PC-9 (cell line): ENCODE measurements at regions of chr10 and their contacts with region 1.

Region 1: DNA sequence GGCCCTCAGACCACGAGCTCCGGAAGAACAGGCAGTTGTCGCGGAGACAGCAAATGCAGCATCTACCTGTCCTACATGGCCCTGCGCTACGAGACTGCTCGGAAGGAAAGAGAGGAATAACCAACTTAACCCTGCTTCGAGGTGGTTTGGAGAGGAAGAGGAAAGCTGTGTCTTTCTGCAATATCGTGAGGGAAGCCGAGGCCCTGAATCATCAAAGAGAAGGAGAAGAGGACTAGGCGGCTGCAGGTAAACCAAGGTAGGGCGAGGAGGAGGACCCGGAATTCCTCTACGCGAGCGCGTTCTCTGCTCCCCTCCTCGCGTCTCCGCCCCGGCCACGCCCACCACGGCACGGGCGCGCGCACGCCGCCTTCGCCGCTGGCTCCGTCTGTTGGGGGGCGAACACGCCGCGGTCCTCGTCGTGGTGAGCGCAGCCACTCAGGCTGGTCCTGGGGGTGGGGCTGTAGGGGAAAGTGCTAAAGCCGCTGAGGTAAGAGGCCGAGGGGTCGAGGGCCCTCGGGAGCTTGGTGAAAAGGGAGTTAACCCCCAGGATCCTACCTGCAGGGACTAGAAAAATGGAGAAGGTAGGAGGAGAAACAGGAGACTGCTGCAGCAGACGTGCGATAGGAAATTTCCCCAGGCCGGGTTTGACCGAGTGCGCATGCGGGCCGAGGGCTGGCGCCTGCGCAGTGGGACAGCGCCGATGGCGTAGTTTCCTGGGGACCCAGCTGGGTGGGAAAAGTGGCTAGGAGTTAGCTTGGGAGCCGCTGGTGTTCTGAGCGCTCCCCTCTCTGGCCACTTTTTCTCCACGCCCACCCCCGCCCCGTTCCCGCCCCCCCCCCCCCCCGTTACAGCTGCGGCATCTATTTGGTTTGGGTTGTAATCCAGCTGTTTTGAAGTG is at the starts of genes ANAPC16 and ASCC1:
- DNase-seq: peak; percentile 88 to 98
- H3K4me3 ChIP-seq: peak within 1 kb of the TSS; percentile 80
- H3K27ac ChIP-seq: peak within 1 kb of the TSS; percentile 90
- H3K4me1 ChIP-seq: peaks cover 45% of the 10 kb centered on the region
- H3K27me3 ChIP-seq: no peaks in the 10 kb centered on the region
- CTCF ChIP-seq: no peak
- total RNA-seq, gene ANAPC16: 142 and 171 TPM in 2 replicates
- total RNA-seq, gene ASCC1: 108 and 129 TPM in 2 replicates

Region 2: GRCh38 chr10:71974489-71975021 is 241.3 kb before region 1 on chr10:
- CTCF ChIA-PET with region 1: no interaction called
- POLR2A ChIA-PET with region 1: interaction called, 6 read pairs
- intact Hi-C with region 1: loop called (anchors 5 kb)
- DNase-seq: peak; percentile 69 to 91
- H3K4me3 ChIP-seq: no peak overlapping the region
- H3K27ac ChIP-seq: peak overlapping the region; percentile 56
- H3K4me1 ChIP-seq: peaks cover 37% of the 10 kb centered on the region
- H3K27me3 ChIP-seq: no peaks in the 10 kb centered on the region
- CTCF ChIP-seq: no peak

Region 3: DNA sequence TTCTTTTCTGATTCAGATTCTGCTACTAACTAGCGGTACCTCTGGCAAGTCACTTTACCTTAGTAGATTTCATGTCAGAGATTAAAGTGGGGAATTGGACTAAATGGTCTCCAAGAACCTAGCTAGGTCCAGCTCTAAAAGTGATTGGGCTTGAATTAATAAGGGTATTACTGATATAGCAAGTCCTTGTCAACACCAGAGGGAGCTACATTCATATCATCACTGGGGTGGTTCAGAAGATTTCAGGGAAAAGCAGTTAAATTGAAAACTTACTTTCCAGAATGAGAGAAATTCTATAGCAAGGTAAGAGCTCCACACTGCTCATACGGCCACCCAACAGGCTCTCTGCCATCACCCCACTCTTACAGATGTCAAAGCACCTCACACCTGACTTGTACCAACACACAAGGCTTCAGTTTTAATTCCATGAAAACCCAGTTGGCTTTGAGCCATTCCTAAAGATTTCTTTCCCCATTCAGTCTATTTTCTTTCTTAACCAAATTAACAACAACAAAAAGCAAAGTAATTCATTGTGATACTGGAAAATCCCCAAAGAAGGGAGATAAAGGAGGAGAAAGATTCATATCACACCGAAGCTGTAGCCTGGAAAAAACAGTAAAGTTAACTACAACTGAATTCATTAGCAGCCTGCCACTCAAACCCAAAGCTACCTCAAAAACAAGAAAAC is 89.6 kb before region 1 on chr10:
- CTCF ChIA-PET with region 1: interaction called, 8 read pairs
- POLR2A ChIA-PET with region 1: interaction called, 16 read pairs
- intact Hi-C with region 1: no loop called
- DNase-seq: no peak
- H3K4me3 ChIP-seq: no peak overlapping the region
- H3K27ac ChIP-seq: no peak overlapping the region
- H3K4me1 ChIP-seq: no peaks in the 10 kb centered on the region
- H3K27me3 ChIP-seq: no peaks in the 10 kb centered on the region
- CTCF ChIP-seq: peak; percentile 71

Region 4: DNA sequence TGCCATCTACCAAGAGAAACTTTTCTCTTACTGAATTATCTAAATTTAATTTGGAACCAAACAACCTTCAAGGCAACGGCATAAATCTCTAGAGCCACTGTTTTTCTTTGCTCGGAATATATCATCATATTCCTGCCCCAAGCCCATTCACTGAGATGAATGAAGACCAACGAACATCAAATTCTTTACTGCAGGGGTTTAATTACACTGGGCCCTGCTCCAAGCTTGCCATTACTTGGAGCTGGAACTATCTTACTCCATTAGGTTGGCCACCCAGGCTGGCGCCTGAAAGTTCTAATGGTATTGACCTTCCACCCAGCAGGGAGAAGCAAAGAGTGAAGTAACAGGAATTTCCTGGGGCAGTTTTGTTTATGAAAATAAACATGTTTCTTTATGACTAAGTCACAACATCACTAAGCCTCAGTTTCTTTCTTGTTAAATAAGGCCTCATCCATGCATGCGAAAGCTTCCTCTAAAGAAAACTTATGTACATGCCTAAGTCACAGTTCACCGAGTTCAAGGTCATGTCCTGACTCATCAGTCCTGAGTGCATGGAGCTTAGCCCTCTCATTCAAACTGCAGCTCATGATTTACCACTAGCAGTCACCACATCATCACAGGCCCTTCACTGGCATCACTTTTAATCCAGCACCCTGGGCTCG is 42.1 kb before region 1 on chr10:
- CTCF ChIA-PET with region 1: interaction called, 4 read pairs
- POLR2A ChIA-PET with region 1: interaction called, 7 read pairs
- intact Hi-C with region 1: loop called (anchors 2 kb)
- DNase-seq: peak in 1 of 2 experiments; percentile 48
- H3K4me3 ChIP-seq: no peak overlapping the region
- H3K27ac ChIP-seq: peak overlapping the region; percentile 43
- H3K4me1 ChIP-seq: peaks cover 61% of the 10 kb centered on the region
- H3K27me3 ChIP-seq: no peaks in the 10 kb centered on the region
- CTCF ChIP-seq: no peak

Region 5: GRCh38 chr10:72204296-72204695 is 11.6 kb before region 1 on chr10:
- CTCF ChIA-PET with region 1: interaction called, 10 read pairs
- POLR2A ChIA-PET with region 1: no interaction called
- intact Hi-C with region 1: no loop called
- DNase-seq: no peak
- H3K4me3 ChIP-seq: no peak overlapping the region
- H3K27ac ChIP-seq: no peak overlapping the region
- H3K4me1 ChIP-seq: peaks cover 2% of the 10 kb centered on the region; the same call in 1 of the 2 replicates
- H3K27me3 ChIP-seq: no peaks in the 10 kb centered on the region
- CTCF ChIP-seq: no peak